Left cardiac atrium (tissue), 4 donors: ENCODE measurements at regions of chr15 and their contacts with region 1.

Region 1: DNA sequence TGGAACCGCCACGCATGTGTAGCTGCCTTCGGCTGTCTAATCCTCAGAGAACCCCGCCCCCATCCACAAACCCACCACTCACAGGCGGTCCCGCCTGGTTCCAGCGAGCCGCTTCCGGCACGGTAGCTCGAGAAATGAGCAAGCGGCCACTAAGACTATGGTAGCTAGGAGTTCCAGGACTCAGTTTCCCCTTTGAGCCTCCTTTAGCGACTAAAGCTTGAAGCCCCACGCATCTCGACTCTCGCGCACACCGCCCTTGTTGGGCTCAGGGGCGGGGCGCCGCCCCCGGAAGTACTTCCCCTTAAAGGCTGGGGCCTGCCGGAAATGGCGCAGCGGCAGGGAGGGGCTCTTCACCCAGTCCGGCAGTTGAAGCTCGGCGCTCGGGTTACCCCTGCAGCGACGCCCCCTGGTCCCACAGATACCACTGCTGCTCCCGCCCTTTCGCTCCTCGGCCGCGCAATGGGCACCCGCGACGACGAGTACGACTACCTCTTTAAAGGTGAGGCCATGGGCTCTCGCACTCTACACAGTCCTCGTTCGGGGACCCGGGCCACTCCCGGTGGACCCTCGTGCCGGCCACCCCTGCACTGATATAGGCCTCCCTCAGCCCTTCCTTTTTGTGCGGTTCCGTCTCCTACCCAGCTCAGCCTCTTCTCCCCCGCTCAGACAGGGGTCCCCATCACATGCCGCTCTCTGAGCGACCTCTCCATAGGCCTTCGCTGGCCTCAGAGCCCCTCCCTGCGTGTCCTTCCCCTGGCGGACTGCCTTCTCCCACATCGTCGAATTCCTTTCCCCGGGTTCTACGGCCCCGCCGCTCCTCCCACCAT is at the start of gene RAB11A:
- DNase-seq: peak; percentile 98
- ATAC-seq: peak; percentile 99
- total RNA-seq, gene RAB11A: 159 to 202 TPM

Region 2: DNA sequence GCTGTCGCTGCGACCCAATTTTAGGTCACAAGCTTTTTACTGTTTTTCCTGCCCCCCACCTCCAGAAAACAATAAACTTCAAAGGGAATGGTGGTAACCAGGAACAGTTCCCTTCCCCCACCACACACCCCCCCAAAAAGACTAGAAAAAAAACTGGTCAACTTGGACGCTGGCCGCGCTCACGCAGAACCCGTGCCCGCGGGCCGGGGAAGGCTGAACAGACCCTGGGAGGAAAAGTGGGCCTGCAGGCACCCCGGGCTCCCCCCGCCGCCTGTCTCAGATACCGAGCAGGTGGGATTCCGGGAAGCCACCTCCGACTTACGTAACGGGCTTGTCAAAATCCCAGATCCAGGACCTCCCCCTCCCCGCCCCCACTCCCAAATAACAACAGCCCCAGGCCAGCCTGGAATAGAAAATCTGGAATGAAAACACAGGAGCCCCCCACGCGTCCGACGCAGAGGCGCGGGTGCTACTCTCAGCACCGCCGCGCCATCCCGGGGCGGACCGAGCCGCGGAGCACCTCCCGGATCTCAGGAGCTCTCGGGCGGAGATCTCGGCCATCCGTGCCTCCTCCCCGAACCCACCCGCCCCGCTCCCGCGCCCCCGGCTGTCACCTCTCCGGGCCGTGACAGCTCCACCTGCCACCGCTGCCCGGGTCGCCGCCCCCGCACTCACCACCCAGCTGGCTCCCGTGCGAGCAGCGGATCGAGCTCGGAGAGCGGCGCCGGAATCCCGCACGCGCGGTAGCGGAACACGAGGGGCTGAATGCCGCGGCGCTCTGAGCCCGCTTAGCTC is 77.8 kb before region 1 on chr15:
- intact Hi-C with region 1: loop called in 1 of 2 experiments (anchors 1 kb)
- DNase-seq: peak; percentile 67
- ATAC-seq: peak; percentile 59 to 67